ENCODE measurements at regions of chr6 and their contacts with region 1.

Region 1: GRCh38 chr6:83381949-83382348 is 48.9 kb downstream of the ME1 start:
- DNase-seq: no peak
- H3K4me3 ChIP-seq: no peak overlapping the region
- H3K27me3 ChIP-seq: no peaks in the 10 kb centered on the region
- CTCF ChIP-seq: no peak

Region 2: DNA sequence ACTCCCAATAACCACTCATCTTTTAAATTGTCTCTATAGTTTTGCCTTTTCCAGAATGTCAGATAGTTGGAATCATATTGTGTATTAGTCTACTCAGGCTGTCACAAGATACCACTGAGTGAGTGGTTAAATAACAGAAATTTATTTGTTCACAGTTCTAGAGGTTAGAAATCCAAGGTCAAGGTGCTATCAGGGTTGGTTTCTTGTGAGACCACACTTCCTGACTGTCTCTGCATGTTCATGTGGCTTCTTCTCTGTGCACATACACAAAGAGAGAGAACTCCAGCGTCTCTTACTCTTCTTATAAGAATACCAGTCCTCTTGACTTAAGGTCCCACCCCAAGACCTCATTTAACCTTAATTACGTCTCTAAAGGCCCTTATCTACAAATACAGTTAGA is 106.5 kb after region 1 on chr6:
- CTCF ChIA-PET with region 1: no interaction called
- POLR2A ChIA-PET with region 1: no interaction called
- DNase-seq: no peak
- H3K4me3 ChIP-seq: no peak overlapping the region
- H3K27me3 ChIP-seq: no peaks in the 10 kb centered on the region
- CTCF ChIP-seq: no peak

Region 3: GRCh38 chr6:83536034-83536646 is 154.2 kb after region 1 on chr6:
- CTCF ChIA-PET with region 1: no interaction called
- POLR2A ChIA-PET with region 1: interaction called, 10 read pairs
- DNase-seq: no peak
- H3K4me3 ChIP-seq: no peak overlapping the region
- H3K27me3 ChIP-seq: 0 out of 2 replicates have a peak, but pooled peaks cover 1% of the 10 kb centered on the region
- CTCF ChIP-seq: peak; percentile 83

Measured in BJ (cell line).